Ovary (tissue), 10 donors: ENCODE measurements at regions of chr13 and their contacts with region 1.

Region 1: GRCh38 chr13:110593430-110594130 is 21.8 kb upstream of the NAXD start:
- DNase-seq: no peak
- H3K4me3 ChIP-seq: no peak overlapping the region
- H3K27ac ChIP-seq: no peak overlapping the region
- H3K4me1 ChIP-seq: no peaks in the 10 kb centered on the region
- H3K27me3 ChIP-seq: no peaks in the 10 kb centered on the region
- CTCF ChIP-seq: peak; percentile 41 to 74 (median 73)
- EP300 ChIP-seq: no peak
- POLR2A ChIP-seq: no peak

Region 2: DNA sequence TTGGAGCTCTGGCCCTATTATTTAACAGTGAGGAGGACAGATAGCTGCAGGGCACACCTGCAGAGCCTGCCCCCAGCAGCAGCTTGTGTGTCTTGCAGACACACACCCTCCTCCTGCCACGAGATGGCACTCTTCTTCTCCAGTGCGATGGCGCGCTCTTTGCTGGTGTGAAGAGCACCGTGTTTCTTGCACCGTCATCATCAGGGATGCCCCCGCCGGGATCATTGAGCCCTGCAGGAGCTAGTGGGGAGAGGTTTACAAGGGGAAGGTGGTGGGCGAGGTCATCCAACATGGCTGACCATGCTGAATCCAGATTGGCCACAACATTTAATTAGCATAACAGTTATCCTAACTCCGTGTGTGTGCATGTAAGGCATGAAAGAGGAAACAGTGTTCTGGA is 137.6 kb before region 1 on chr13:
- intact Hi-C with region 1: loop called in 1 of 4 experiments (anchors 10 kb)
- DNase-seq: peak; percentile 76 to 82 (median 79)
- H3K4me3 ChIP-seq: no peak overlapping the region
- H3K27ac ChIP-seq: no peak overlapping the region
- H3K4me1 ChIP-seq: peaks cover 2% of the 10 kb centered on the region
- H3K27me3 ChIP-seq: no peaks in the 10 kb centered on the region
- CTCF ChIP-seq: peak; percentile 61 to 65 (median 62)
- EP300 ChIP-seq: no peak
- POLR2A ChIP-seq: no peak

Region 3: GRCh38 chr13:110819203-110820014 is 225.8 kb after region 1 on chr13:
- intact Hi-C with region 1: loop called in 3 of 4 experiments (anchors 5 to 10 kb)
- DNase-seq: peak; percentile 64 to 85 (median 82)
- H3K4me3 ChIP-seq: no peak overlapping the region
- H3K27ac ChIP-seq: no peak overlapping the region
- H3K4me1 ChIP-seq: no peaks in the 10 kb centered on the region
- H3K27me3 ChIP-seq: no peaks in the 10 kb centered on the region
- CTCF ChIP-seq: peak; percentile 90 to 95 (median 94)
- EP300 ChIP-seq: no peak
- POLR2A ChIP-seq: no peak